ENCODE measurements at regions of chr22 and their contacts with region 1.

Region 1: DNA sequence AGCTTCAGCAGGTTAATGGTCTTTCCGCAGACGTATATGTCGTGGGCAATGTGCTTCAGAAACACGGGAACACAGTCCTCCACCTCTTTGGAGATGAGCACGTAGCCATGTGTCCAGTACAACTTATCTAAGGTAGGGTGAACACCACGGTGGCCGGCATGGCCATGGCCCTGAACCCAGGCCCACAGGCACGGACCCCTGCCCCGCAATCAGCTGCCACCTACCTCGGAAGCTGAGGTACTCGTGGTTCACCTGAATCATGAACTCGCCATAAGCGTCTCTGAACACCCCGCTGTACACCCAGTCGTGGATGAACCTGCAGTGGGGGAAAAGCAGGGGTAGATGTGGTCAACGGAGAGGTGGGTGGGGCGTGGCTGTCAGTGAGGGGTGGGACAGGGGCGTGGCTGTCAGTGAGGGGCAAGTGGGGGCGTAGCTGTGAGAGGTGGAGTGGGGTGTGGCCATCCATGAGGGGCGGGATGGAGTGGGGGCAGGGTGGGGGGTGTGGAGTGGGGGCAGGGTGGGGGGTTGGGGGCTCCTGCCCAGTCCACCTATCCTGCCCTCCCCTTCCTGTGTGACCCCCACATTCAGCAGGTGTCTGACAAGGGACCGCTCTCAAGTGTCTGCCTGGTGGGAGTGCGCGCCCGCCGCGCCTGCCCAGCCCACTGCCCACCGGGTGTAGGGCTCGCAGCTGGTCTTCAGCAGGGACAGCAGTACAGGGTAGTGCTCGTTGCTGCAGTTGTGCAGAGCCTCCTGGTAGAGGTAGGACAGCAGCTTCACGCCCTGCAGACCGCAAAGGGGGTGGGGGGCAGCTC is 18.6 kb downstream of the TUBGCP6 start:
- DNase-seq: no peak
- ATAC-seq: no peak
- H3K4me3 Mint-ChIP-seq: no peak overlapping the region
- H3K27ac Mint-ChIP-seq: no peak overlapping the region
- H3K4me1 Mint-ChIP-seq: no peaks in the 10 kb centered on the region
- H3K27me3 Mint-ChIP-seq: no peaks in the 10 kb centered on the region
- CTCF ChIP-seq: no peak

Region 2: GRCh38 chr22:50236731-50237409 is 10.6 kb after region 1 on chr22:
- CTCF ChIA-PET with region 1: interaction called, 15 read pairs
- POLR2A ChIA-PET with region 1: no interaction called
- DNase-seq: no peak
- ATAC-seq: peak; percentile 16; the same call in 1 of the 2 replicates
- H3K4me3 Mint-ChIP-seq: no peak overlapping the region
- H3K27ac Mint-ChIP-seq: no peak overlapping the region
- H3K4me1 Mint-ChIP-seq: no peaks in the 10 kb centered on the region; the same call in 1 of the 2 replicates
- H3K27me3 Mint-ChIP-seq: no peaks in the 10 kb centered on the region
- CTCF ChIP-seq: peak; percentile 17; the same call in 1 of the 2 replicates

Measured in WTC11 (cell line).